ENCODE measurements at regions of chr3 and their contacts with region 1.

Region 1: DNA sequence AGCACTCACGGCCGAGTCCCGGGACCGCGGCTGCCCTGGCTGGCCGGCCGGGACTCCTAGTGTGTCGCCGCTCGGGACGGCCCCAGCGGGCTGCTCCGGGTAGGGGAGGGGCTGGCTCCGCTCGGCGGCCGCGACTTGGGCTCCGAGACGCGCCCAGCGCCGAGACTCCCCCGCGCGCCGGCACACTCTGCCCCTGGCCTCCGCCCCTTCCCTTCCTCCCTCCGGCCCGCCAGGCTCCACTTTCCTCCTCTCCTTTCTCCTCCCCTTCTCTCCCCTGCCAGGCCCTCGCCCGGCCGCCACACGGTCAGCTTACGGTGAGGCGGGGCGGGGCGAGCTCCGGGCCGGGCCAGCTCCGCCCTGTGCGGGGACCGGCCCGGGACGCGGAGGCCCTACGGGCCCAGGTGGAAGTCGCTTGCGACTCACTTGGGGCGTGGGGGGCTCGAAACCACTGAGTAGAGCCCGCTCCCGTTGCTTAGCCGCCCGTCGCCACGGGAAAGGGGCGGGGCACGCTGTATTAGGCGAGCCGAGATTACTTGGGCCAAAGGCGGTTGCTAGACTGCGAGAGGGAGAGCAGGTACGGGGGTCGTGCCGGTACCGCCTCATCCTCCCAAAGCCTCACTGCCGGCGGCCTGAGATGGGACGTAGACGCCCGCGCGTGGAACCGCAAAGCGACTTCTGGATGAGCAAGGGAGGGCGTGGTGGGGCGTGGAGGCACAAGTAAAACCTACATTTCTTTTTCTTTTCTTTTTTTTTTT is at the start of gene ITGB5:
- DNase-seq: peak; percentile 86
- H3K4me3 Mint-ChIP-seq: peak within 1 kb of the TSS; percentile 78
- H3K27ac Mint-ChIP-seq: peak within 1 kb of the TSS; percentile 80
- H3K4me1 Mint-ChIP-seq: peaks cover 35% of the 10 kb centered on the region
- H3K27me3 Mint-ChIP-seq: no peaks in the 10 kb centered on the region
- CTCF ChIP-seq: no peak
- total RNA-seq, gene ITGB5: 193 and 225 TPM in 2 replicates

Region 2: DNA sequence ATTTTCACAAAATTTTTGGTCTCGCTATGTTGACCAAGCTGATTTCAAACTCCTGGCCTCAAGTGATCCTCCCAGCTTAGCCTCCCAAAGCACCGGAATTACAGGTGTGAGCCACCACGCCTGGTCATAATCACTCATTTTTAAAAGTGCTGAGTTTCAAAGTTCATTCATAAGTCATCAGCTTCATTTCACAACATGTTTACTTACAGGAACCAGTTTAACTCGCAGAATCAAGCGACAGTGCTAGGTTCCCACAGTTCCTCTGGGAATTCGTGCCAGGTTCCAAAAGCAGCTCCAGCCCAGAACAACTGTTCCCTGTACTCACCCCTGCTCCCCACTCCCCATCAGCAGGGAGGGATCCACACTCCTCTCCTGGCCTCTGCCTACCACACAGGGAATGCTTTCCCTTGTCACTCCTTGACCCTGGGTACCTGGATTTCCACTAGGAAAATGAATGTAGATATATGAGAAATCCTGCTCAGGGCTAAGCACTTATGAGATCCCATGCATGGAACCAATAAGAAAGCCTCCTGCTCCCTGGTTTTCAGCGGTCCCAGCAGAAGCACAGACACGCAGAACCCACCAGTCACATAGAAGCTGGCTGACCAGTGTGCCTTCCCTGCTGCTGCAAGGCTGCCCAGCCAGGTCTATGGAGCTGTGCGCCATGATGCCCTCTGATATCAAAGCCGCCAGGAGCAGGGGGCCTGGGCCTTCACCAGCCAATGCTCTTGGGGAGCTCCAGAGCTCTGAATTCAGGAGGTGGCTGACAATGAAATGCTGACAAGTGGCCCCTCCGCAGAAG is 72.5 kb before region 1 on chr3:
- CTCF ChIA-PET with region 1: interaction called, 4 read pairs
- intact Hi-C with region 1: loop called (anchors 2 kb)
- DNase-seq: peak; percentile 55
- H3K4me3 Mint-ChIP-seq: peak overlapping the region; percentile 51
- H3K27ac Mint-ChIP-seq: peak overlapping the region; percentile 97
- H3K4me1 Mint-ChIP-seq: peaks cover 84% of the 10 kb centered on the region
- H3K27me3 Mint-ChIP-seq: no peaks in the 10 kb centered on the region
- CTCF ChIP-seq: no peak

Region 3: GRCh38 chr3:124951511-124952281 is 64.3 kb after region 1 on chr3:
- CTCF ChIA-PET with region 1: no interaction called
- intact Hi-C with region 1: no loop called
- DNase-seq: no peak
- H3K4me3 Mint-ChIP-seq: no peak overlapping the region
- H3K27ac Mint-ChIP-seq: no peak overlapping the region
- H3K4me1 Mint-ChIP-seq: peaks cover 12% of the 10 kb centered on the region
- H3K27me3 Mint-ChIP-seq: no peaks in the 10 kb centered on the region
- CTCF ChIP-seq: no peak